Right ventricle myocardium inferior (tissue), 1 donor: ENCODE measurements at regions of chr3 and their contacts with region 1.

Region 1: DNA sequence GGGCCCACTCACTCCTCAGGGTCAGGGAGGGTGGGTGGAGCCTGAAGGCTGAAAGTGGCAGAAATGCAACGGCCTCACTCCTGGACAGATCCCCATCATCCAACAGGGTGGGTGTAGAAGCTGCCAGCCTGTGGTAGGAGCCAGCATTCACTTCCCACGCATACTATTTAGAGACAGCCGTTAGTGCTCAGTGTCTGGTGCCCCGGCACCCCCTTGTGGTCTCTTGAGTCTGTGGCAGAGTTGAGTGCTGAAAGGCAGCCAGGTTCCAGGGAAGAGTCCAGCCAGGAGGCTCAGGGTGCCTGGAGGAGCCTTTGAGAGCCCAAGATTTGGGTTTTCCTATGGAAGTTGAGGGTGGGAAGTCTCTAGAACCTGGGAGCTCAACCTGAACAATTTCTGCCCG is 2.1 kb upstream of the GNAT1 start:
- DNase-seq: peak; percentile 77
- ATAC-seq: peak; percentile 65

Region 2: GRCh38 chr3:50121416-50122032 is 67.8 kb before region 1 on chr3:
- intact Hi-C with region 1: loop called (anchors 1 kb)
- DNase-seq: no peak
- ATAC-seq: peak; percentile 86

Region 3: DNA sequence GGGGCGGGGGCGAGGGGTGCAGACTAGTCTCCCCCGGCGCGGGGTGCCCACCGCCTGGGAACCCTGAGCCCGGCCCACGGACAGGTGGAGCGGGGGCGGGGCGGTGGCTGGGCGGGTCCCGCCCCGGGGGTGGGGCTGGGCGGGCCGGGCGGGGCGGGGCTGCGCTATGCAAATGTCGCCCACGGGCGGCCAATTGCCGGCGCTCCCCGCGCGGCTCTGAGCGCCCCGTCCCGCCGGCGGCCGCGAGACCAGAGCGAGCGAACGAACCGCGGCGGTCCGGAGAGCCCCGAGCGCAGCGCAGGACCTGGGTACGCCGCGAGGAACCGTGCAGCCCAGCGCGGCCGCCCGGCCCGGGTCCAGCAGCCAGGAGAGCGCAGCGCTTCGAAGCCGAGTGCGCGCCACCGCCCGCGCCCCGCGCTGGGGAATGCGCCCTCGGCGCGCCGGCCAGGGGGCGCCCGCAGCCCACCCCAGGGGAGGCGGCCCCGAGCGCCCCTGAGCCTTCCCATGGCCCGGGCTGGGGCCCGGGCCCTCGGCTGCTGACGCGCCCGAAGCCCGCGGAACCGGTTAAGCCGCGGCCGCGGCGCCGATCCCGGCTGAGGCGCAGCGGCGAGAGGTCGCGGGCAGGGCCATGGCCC is 34.3 kb before region 1 on chr3 and contains the start of gene SEMA3F:
- intact Hi-C with region 1: loop called (anchors 2 kb)
- DNase-seq: peak; percentile 83
- ATAC-seq: peak; percentile 86
- total RNA-seq, gene SEMA3F: 12.3 TPM

Region 4: DNA sequence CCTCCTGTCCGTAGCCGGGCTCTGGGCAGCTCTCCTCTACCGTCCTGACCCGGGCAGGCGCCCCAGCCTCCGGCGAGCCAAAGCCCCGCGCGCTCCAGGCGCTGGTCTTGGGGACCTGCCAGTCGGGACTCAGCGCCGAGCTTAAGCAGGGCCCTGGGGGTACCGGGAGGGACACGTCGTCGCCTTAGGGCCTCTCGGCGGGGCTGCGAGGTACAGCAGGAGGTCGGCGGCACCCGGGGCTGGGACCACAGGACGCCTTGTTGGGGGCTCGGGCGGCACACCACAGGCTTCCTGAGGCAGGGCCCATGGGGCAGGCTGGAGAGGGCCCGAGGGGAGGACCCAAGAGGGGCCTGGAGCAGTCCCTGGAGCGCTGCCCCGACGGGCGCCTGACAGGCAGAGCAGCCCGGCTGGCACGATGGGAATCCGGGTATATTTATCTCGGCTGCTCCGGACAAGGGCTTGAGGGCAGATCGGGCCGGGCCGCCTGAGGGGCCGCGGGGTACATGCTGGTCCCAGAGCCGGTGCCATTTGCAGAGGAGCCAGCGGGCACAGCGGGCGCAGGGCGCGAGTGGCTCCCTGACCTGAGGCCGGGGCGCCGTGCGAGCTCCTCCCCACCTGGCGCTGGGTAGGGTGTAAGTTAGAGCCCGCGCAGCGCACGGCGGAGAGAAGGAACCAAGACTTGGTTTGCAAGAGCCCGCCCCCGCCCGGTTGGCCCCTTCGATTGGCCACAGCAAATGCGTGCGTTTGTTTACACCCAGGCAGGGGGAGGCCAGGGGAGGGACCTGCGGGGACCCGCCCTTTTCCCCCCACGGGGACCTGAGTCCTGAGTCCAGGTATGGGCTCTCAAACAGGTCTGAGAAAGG is 16.4 kb after region 1 on chr3:
- intact Hi-C with region 1: no loop called
- DNase-seq: peak; percentile 81
- ATAC-seq: peak; percentile 71